PC-3 (cell line): ENCODE measurements at regions of chr5 and their contacts with region 1.

Region 1: DNA sequence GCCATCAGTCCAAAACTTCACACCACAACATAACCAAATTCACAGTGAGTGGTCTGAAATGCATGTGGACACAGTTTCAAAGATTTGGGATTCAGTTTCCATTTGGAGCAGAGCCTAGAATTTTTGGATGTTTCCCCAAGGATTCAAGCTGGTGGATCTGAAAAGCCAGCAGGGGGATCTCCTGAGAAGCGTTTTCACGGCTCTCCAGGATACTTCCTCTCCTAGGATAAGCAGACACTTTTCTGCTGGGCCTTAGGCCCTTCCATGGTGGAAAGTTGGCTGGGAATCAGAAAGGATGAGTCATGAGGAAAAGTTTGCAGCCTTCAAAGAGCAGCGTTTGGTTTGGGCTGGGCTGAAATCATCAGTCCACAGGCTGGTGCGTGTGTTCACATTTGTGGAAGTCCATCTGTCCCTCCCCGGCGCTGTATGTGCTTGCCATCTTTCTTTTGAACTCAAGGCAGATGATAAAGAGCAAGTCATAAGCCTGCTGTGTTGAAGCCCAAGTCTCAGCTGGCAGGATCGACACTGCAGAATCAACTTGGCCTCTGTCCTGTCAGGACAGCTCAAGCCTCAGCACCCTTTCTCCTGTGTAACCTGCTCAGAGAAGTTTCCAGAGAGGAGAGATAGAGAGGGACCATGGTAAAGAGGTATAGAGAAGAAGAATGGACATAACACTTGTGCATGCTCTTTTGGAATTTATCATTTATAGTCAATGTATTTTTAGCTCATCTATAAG is 152.6 kb upstream of the MSX2 start:
- DNase-seq: peak; percentile 91
- ATAC-seq: peak; percentile 86
- H3K4me3 ChIP-seq: no peak overlapping the region
- H3K27ac ChIP-seq: no peak overlapping the region
- H3K4me1 ChIP-seq: peaks cover 10% of the 10 kb centered on the region
- H3K27me3 ChIP-seq: no peaks in the 10 kb centered on the region
- CTCF ChIP-seq: peak; percentile 53

Region 2: GRCh38 chr5:174532455-174533453 is 39.1 kb before region 1 on chr5:
- CTCF ChIA-PET with region 1: no interaction called
- POLR2A ChIA-PET with region 1: no interaction called
- intact Hi-C with region 1: loop called (anchors 5 kb)
- DNase-seq: peak; percentile 92
- ATAC-seq: peak; percentile 71
- H3K4me3 ChIP-seq: peak overlapping the region; percentile 61
- H3K27ac ChIP-seq: peak overlapping the region; percentile 99
- H3K4me1 ChIP-seq: peaks cover 66% of the 10 kb centered on the region
- H3K27me3 ChIP-seq: no peaks in the 10 kb centered on the region
- CTCF ChIP-seq: no peak